CD4-positive, alpha-beta memory T cell (primary cell): ENCODE measurements at regions of chr10 and their contacts with region 1.

Region 1: GRCh38 chr10:100338434-100339036 is 8.5 kb upstream of the SCD start:
- DNase-seq: peak; percentile 68 to 74 (median 69)
- H3K4me3 ChIP-seq: no peak overlapping the region
- H3K4me3 Mint-ChIP-seq: no peak overlapping the region
- H3K27ac ChIP-seq: no peak overlapping the region
- H3K27ac Mint-ChIP-seq: peak overlapping the region in 2 of 7 donors; percentile 3 to 35
- H3K4me1 ChIP-seq: no peaks in the 10 kb centered on the region
- H3K4me1 Mint-ChIP-seq: no peaks in the 10 kb centered on the region
- H3K27me3 ChIP-seq: no peaks in the 10 kb centered on the region
- H3K27me3 Mint-ChIP-seq: peaks cover 0 to 2% of the 10 kb centered on the region in 2 donors

Region 2: DNA sequence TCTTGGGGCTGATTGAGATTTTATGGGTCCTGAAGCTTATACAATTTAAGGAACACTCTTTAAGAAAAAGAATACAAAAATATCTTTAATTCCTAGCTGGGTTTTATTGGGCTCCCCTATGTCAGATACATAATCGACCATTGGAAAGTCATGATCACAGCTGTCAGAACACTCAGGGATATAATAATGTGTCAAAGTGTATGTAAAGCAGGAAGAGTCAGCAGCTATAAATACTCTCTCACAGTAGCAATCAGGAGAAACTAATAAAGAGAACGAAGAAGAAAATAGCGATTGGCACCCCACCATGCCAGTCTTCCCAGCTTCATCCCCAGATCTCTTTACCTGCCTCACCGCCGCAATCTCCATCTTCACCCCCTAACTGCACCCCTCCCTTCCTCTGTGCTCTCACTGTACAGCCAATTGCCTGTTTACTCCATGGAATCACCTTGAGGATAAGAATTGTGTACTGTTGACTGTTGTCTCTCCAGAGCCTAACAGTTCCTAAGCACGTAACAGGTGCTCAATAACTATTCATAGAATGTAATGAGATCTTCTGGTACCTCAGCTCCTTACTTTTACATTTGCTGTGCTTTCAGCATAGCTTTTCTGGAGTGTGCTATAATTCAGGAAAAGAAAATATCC is 100.3 kb after region 1 on chr10:
- CTCF ChIA-PET with region 1: interaction called, 202 read pairs
- POLR2A ChIA-PET with region 1: no interaction called
- intact Hi-C with region 1: loop called (anchors 1 kb)
- DNase-seq: no peak
- H3K4me3 ChIP-seq: no peak overlapping the region
- H3K4me3 Mint-ChIP-seq: no peak overlapping the region
- H3K27ac ChIP-seq: no peak overlapping the region
- H3K27ac Mint-ChIP-seq: no peak overlapping the region
- H3K4me1 ChIP-seq: no peaks in the 10 kb centered on the region
- H3K4me1 Mint-ChIP-seq: peaks cover 0 to 1% (median under 1%) of the 10 kb centered on the region in 4 donors
- H3K27me3 ChIP-seq: no peaks in the 10 kb centered on the region
- H3K27me3 Mint-ChIP-seq: peaks cover 1 to 2% of the 10 kb centered on the region in 2 donors